Lower lobe of right lung (tissue), 2 donors: ENCODE measurements at regions of chr3 and their contacts with region 1.

Region 1: GRCh38 chr3:41881233-41881821 is 80.6 kb downstream of the ULK4 start:
- DNase-seq: no peak
- ATAC-seq: no peak
- H3K4me3 ChIP-seq: no peak overlapping the region
- H3K27ac ChIP-seq: no peak overlapping the region
- H3K4me1 ChIP-seq: no peaks in the 10 kb centered on the region
- H3K27me3 ChIP-seq: no peaks in the 10 kb centered on the region
- CTCF ChIP-seq: peak; percentile 75

Region 2: DNA sequence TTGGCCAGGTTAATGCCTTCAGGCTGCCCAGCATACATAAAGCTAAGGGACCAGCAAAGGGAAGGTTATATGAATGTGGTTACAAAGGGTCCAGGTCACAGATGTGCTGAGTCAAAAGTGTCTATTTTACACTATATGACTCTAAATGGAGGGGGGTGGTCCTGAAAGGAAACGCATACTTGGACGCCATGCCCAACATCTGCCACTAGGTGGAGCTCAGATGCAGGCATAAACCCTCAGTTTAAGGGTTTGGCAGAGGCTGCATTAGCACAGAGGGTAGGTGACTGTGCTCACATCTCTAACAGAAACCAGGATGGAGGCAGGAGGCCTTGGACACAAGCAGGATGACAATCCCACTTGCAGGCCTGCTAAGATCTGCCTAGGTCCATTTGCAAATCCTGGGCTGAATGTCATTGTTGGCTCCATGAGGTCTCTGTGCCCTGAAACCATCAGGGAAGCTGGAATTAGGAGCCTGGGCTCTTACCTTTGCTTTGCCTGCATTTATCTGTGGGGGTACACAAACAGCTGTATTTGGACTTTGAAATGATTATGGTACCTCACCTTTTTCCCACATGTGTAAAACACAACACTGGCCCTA is 1300.7 kb before region 1 on chr3:
- intact Hi-C with region 1: loop called (anchors 5 kb)
- DNase-seq: peak; percentile 55
- ATAC-seq: peak; percentile 73 to 82
- H3K4me3 ChIP-seq: no peak overlapping the region
- H3K27ac ChIP-seq: no peak overlapping the region
- H3K4me1 ChIP-seq: no peaks in the 10 kb centered on the region
- H3K27me3 ChIP-seq: no peaks in the 10 kb centered on the region
- CTCF ChIP-seq: peak; percentile 92

Region 3: GRCh38 chr3:42025370-42026138 is 144.2 kb after region 1 on chr3:
- intact Hi-C with region 1: no loop called
- DNase-seq: peak; percentile 86
- ATAC-seq: peak; percentile 95
- H3K4me3 ChIP-seq: peak overlapping the region; percentile 0
- H3K27ac ChIP-seq: peak overlapping the region; percentile 78
- H3K4me1 ChIP-seq: peaks cover 44% of the 10 kb centered on the region
- H3K27me3 ChIP-seq: no peaks in the 10 kb centered on the region
- CTCF ChIP-seq: no peak